Heart left ventricle (tissue), 16 donors: ENCODE measurements at regions of chr5 and their contacts with region 1.

Region 1: GRCh38 chr5:96459313-96460121 is 26.5 kb upstream of the PCSK1 start:
- DNase-seq: no peak
- ATAC-seq: no peak
- H3K4me3 ChIP-seq: no peak overlapping the region
- H3K27ac ChIP-seq: no peak overlapping the region
- H3K4me1 ChIP-seq: no peaks in the 10 kb centered on the region
- H3K27me3 ChIP-seq: no peaks in the 10 kb centered on the region
- CTCF ChIP-seq: no peak
- POLR2A ChIP-seq: no peak

Region 2: DNA sequence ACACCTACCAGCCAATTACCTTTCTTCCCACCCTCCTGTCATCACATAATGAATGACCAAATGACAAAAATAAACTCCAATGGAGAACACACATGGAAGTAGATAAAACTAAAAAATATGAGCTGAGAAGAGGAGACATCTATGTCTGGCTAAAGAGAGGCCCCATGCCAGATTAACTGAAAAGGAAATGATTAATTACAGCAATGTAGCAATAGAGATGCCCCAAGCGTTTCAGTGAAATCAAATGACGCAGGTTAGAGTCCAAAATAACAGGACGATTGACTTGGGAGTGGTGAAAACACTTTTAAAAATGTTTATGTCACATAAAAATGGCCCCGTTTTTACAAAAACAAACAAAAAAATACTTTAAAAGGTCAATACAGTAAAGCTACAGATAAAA is 33.1 kb after region 1 on chr5:
- intact Hi-C with region 1: loop called in 1 of 10 experiments (anchors 5 kb)
- DNase-seq: no peak
- ATAC-seq: no peak
- H3K4me3 ChIP-seq: no peak overlapping the region
- H3K27ac ChIP-seq: no peak overlapping the region
- H3K4me1 ChIP-seq: no peaks in the 10 kb centered on the region
- H3K27me3 ChIP-seq: no peaks in the 10 kb centered on the region
- CTCF ChIP-seq: no peak
- POLR2A ChIP-seq: no peak